Right ventricle myocardium inferior (tissue), 1 donor: ENCODE measurements at regions of chr13 and their contacts with region 1.

Region 1: DNA sequence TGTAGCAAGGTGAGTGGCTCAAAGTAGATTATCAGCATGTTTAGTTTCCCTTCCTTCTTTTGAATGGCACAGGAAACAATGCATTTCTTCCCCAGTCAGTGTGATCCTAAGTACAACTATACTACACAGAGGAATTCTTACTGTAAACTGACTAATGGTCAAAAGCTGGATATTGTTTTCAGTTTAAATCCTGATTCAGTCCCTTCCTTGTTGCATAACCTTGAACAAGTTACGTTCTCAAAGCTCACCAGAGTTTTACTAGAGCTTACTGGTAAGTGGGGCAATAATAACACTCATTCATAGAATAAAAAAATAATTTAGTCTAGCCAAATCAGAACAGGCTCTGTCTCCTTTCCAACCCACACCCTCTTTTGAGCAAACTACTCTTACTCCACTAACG is 180.1 kb downstream of the POSTN start:
- DNase-seq: no peak
- ATAC-seq: no peak

Region 2: GRCh38 chr13:37481885-37482227 is 63.4 kb after region 1 on chr13:
- intact Hi-C with region 1: loop called (anchors 2 kb)
- DNase-seq: no peak
- ATAC-seq: no peak

Region 3: GRCh38 chr13:37701972-37702371 is 283.5 kb after region 1 on chr13:
- intact Hi-C with region 1: no loop called
- DNase-seq: no peak
- ATAC-seq: no peak